ENCODE measurements at regions of chr6 and their contacts with region 1.

Region 1: GRCh38 chr6:44468835-44469234 is 81.3 kb downstream of the CDC5L start:
- DNase-seq: no peak
- H3K4me3 ChIP-seq: no peak overlapping the region
- H3K27ac ChIP-seq: no peak overlapping the region
- H3K4me1 ChIP-seq: no peaks in the 10 kb centered on the region
- H3K27me3 ChIP-seq: no peaks in the 10 kb centered on the region
- CTCF ChIP-seq: no peak

Region 2: DNA sequence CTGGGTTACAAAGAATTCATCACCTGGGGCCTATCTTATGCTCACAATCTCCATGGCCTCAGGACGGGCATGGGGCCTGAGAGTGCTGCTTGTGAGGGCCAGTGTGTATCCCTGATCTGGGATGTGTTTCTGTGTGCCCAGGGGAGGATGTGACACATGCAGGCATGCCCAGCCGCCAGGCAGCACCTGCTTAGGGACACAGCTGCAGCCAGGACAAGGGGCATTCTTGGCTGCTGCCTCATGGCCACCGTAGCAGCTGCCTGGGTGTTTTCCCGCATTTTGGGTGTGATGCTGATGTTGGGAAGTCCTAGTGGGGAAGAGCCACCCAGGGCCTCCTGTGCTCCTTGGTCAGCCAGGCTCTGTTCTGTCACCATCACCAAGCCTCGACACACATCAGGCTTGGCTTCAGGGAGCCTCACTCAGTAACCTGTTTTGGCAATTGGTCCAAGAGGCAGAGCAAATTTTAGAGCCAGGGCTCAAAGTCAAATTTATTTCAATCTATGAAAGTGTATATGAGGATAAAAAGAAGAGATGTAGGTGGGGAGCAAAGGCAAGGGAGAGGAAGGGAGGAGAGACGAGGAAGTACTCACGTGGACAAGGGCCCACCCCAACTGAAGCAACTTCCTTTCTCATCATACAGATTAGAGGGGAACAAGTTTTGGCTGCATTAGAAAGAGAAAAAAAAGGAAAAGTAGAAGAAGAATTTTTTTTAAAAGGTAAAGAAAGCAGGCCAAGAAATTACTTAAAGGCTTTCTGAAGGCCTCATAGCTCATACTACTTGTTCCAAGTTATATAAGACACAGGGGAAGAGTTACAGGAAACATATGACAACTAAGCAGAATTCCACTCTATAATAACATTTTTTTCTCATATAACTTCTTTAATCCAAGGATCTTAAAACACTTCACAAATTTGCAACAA is 1178.8 kb after region 1 on chr6:
- CTCF ChIA-PET with region 1: interaction called, 12 read pairs
- POLR2A ChIA-PET with region 1: interaction called, 5 read pairs
- intact Hi-C with region 1: no loop called
- DNase-seq: peak; percentile 14 to 52
- H3K4me3 ChIP-seq: no peak overlapping the region
- H3K27ac ChIP-seq: no peak overlapping the region
- H3K4me1 ChIP-seq: peaks cover 21% of the 10 kb centered on the region
- H3K27me3 ChIP-seq: no peaks in the 10 kb centered on the region
- CTCF ChIP-seq: no peak

Measured in PC-9 (cell line).